Transverse colon (tissue), 4 donors: ENCODE measurements at regions of chr11 and their contacts with region 1.

Region 1: DNA sequence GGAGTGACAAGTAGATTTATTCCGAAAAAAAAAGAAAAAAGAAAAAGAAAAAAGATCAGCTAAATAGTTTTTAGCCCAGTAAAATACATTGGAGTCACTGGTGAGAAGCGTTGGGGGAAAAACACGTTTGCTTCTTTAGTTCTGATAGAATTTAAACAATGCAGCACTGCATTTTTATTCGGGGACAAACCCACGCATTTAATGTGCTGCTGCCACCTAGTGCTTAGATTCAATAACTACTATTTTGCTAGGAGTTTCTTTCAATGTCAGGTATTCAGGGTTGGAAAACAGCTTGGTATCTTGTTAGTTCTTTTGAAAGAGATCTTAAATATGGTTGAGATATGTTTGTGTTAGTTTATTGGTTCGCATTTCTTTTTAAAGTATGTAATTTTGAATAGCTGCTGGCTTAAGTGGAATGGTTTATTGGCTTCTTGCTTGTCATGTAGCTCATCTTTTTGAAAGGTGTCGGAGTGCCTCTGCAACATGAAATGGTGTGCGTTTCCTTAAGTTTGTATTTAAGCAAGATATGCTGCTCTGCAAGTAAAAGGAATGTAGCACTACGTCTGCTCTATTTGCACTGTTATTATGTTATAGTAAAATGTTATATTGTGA is 41.9 kb downstream of the SVIP start:
- DNase-seq: peak; percentile 10
- H3K4me3 ChIP-seq: no peak overlapping the region
- H3K27ac ChIP-seq: no peak overlapping the region
- H3K4me1 ChIP-seq: no peaks in the 10 kb centered on the region
- H3K27me3 ChIP-seq: no peaks in the 10 kb centered on the region
- CTCF ChIP-seq: peak; percentile 45 to 67 (median 61)
- EP300 ChIP-seq: no peak
- POLR2A ChIP-seq: no peak

Region 2: DNA sequence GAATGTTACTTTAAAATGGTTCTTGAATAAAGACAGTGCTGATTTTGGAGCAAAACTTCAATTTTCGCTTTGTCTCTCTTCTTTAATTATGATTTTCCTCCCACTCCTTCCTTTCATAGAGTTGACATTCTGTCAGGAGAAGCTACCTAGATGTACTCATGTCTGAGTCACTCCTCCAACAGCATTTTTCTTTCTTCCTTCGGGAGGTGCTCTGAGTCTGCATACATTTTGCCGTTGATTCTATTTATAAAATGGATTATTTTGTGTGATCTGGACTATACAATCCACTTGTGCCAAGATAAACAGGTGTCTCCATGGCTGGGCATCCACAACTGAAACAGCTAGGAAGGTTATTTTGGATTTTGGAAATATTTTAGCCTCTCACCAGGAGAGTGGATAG is 1183.1 kb before region 1 on chr11:
- in situ Hi-C with region 1: no loop called
- intact Hi-C with region 1: no loop called
- DNase-seq: no peak
- H3K4me3 ChIP-seq: no peak overlapping the region
- H3K27ac ChIP-seq: no peak overlapping the region
- H3K4me1 ChIP-seq: no peaks in the 10 kb centered on the region
- H3K27me3 ChIP-seq: no peaks in the 10 kb centered on the region
- CTCF ChIP-seq: no peak
- EP300 ChIP-seq: no peak
- POLR2A ChIP-seq: no peak

Region 3: GRCh38 chr11:22244986-22245592 is 542.6 kb before region 1 on chr11:
- in situ Hi-C with region 1: loop called in 1 of 4 experiments (anchors 25 kb)
- intact Hi-C with region 1: no loop called
- DNase-seq: peak; percentile 10
- H3K4me3 ChIP-seq: no peak overlapping the region
- H3K27ac ChIP-seq: no peak overlapping the region
- H3K4me1 ChIP-seq: no peaks in the 10 kb centered on the region
- H3K27me3 ChIP-seq: no peaks in the 10 kb centered on the region
- CTCF ChIP-seq: peak in 4 of 5 experiments; percentile 32 to 60 (median 55)
- EP300 ChIP-seq: no peak
- POLR2A ChIP-seq: no peak

Region 4: DNA sequence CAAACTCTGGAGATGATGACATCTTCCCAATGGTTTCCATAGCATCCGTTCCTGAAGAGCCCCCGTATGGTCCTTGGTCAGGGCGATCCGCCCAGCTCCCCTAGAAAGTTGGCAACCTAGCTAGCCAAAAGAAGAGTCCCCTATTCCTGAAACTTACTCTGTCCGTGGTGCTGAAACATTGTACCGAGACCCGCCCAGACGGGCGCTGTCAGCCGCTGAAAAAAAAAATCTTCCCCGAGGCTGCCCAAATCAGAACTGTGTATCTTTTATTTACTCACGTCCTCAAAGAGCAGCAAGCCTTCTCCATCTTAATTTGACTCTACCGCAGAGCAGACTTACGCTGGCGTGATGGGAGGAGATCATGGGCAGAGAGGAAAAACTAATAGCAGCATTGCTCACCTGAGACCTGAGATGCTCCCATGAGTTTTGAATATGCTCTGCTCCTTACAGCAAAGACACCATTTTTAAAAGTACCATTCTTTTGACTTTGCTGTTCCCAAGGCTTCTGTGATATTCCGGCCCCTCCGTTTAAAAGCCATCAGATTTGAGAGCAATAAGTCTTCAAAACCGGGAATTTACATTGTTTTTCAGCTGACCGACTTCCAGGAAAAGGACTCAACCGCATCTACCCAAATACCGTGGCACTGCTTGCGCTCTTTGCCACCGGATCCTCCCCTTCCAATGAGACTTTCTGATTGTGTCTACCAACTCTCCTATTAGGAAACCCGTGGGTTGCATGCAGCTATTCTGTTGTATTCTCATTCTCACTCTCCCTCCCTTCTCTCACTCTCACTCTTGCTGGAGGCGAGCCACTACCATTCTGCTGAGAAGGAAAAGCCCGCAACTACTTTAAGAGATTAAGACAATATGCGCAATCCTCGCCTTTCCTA is 449.8 kb before region 1 on chr11 and contains the start of gene SLC17A6:
- in situ Hi-C with region 1: loop called (anchors 5 to 25 kb)
- intact Hi-C with region 1: loop called (anchors 5 kb)
- DNase-seq: no peak
- H3K4me3 ChIP-seq: no peak within 1 kb of the TSS
- H3K27ac ChIP-seq: no peak within 1 kb of the TSS
- H3K4me1 ChIP-seq: no peaks in the 10 kb centered on the region
- H3K27me3 ChIP-seq: peaks cover 63% of the 10 kb centered on the region
- CTCF ChIP-seq: no peak
- EP300 ChIP-seq: no peak
- POLR2A ChIP-seq: no peak
- total RNA-seq, gene SLC17A6: not detected

Region 5: GRCh38 chr11:22752908-22753310 is 34.7 kb before region 1 on chr11:
- in situ Hi-C with region 1: no loop called
- intact Hi-C with region 1: no loop called
- DNase-seq: no peak
- H3K4me3 ChIP-seq: no peak overlapping the region
- H3K27ac ChIP-seq: no peak overlapping the region
- H3K4me1 ChIP-seq: no peaks in the 10 kb centered on the region
- H3K27me3 ChIP-seq: no peaks in the 10 kb centered on the region
- CTCF ChIP-seq: no peak
- EP300 ChIP-seq: no peak
- POLR2A ChIP-seq: no peak

Region 6: DNA sequence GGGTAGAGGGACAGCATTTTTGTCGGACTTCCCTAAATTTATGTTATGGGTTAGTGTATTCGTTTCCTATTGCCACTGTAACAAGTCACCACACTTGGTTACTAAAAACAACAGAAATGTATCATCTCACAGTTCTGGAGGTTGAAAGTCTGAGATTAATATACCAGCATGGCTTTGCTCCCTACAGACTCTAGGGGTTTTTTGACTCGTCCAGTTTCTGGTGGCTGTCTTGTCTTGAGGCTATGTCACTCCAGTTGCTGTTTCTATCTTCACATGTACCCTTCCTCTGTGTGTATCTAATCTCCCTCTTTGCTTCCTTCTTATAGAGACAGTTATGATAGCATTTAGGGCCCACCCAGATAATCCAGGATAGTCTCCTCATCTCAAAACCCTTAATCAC is 81.7 kb after region 1 on chr11:
- in situ Hi-C with region 1: no loop called
- intact Hi-C with region 1: no loop called
- DNase-seq: no peak
- H3K4me3 ChIP-seq: no peak overlapping the region
- H3K27ac ChIP-seq: no peak overlapping the region
- H3K4me1 ChIP-seq: no peaks in the 10 kb centered on the region
- H3K27me3 ChIP-seq: no peaks in the 10 kb centered on the region
- CTCF ChIP-seq: no peak
- EP300 ChIP-seq: no peak
- POLR2A ChIP-seq: no peak